Prostate gland (tissue), 2 donors: ENCODE measurements at regions of chr6 and their contacts with region 1.

Region 1: DNA sequence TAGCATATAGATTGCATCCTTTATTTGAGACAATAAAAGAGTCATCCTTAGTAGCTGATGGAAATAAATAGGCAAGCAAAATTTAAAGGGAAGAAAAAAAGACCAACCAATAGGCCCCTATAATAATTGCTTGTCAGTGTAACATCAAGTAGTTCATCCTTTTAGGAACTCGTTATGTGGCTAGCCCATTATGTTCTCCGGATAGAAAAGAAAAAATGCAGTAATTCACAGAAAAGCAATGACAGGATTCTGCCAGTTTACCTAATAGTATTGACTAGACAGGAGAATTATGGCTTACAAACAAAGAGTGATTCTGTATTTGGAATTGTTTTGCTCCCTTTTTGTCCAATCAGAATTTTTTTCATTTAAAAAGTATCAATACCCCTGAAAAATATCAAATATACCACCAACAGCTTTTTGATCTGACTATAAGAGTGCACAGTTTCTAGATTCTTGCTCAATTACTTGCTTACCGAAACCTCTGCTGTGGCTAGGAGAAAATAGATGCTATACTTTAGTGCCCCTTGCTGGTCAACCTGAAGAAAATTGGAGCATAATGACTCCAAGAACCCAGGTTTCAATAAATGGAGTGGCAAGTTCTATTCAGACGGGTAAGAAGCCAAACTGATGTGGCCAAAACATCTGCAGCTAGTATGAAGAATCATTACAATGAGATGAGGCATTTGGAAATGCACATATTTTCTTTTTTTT is 91.5 kb upstream of the SASH1 start:
- DNase-seq: no peak
- H3K4me3 ChIP-seq: no peak overlapping the region
- H3K27ac ChIP-seq: no peak overlapping the region
- H3K4me1 ChIP-seq: no peaks in the 10 kb centered on the region
- H3K27me3 ChIP-seq: no peaks in the 10 kb centered on the region
- CTCF ChIP-seq: peak in 3 of 4 experiments; percentile 28 to 65 (median 59)
- POLR2A ChIP-seq: no peak

Region 2: GRCh38 chr6:147859071-147859470 is 392.1 kb before region 1 on chr6:
- intact Hi-C with region 1: no loop called
- DNase-seq: no peak
- H3K4me3 ChIP-seq: no peak overlapping the region
- H3K27ac ChIP-seq: no peak overlapping the region
- H3K4me1 ChIP-seq: no peaks in the 10 kb centered on the region
- H3K27me3 ChIP-seq: no peaks in the 10 kb centered on the region
- CTCF ChIP-seq: no peak
- POLR2A ChIP-seq: no peak

Region 3: GRCh38 chr6:147986846-147987245 is 264.3 kb before region 1 on chr6:
- intact Hi-C with region 1: no loop called
- DNase-seq: no peak
- H3K4me3 ChIP-seq: no peak overlapping the region
- H3K27ac ChIP-seq: no peak overlapping the region
- H3K4me1 ChIP-seq: no peaks in the 10 kb centered on the region
- H3K27me3 ChIP-seq: no peaks in the 10 kb centered on the region
- CTCF ChIP-seq: no peak
- POLR2A ChIP-seq: no peak

Region 4: DNA sequence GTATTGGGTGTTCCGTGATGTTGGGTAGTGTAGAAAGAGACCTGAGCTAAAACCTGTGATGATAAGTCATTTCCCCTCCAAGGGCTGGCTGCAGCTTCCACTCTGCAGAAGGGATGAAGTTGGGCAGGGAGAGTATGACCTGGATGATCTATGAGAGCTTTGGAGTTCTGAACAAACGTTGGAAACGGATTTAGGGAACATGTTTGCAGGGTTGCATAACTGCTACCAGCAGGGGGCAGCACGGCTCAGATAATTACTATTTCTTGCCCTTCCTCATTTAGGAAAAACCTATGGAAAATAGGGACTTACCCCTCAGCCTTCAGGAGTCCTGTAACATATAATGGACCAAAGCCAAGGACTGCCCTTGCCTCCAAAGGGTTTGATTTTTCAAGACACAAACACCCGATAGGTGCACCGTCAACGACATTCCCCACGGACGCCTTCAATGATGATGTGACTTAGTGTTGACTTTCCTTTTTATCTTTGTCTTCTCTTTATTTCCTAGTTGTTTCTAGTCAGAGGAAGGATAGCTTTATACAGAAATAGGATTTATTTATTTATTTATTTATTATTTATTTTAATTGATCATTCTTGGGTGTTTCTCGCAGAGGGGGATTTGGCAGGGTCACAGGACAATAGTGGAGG is 73.4 kb before region 1 on chr6:
- intact Hi-C with region 1: loop called (anchors 5 kb)
- DNase-seq: peak; percentile 52
- H3K4me3 ChIP-seq: no peak overlapping the region
- H3K27ac ChIP-seq: no peak overlapping the region
- H3K4me1 ChIP-seq: no peaks in the 10 kb centered on the region
- H3K27me3 ChIP-seq: no peaks in the 10 kb centered on the region
- CTCF ChIP-seq: peak; percentile 80 to 94 (median 85)
- POLR2A ChIP-seq: no peak

Region 5: GRCh38 chr6:148464319-148465010 is 213.3 kb after region 1 on chr6:
- intact Hi-C with region 1: loop called (anchors 10 kb)
- DNase-seq: peak; percentile 47
- H3K4me3 ChIP-seq: no peak overlapping the region
- H3K27ac ChIP-seq: no peak overlapping the region
- H3K4me1 ChIP-seq: no peaks in the 10 kb centered on the region
- H3K27me3 ChIP-seq: no peaks in the 10 kb centered on the region
- CTCF ChIP-seq: peak; percentile 86 to 91 (median 88)
- POLR2A ChIP-seq: no peak